ENCODE measurements at regions of chr6 and their contacts with region 1.

Region 1: GRCh38 chr6:104896914-104897313 is 37.2 kb upstream of the HACE1 start:
- DNase-seq: no peak
- H3K4me3 Mint-ChIP-seq: no peak overlapping the region
- H3K27ac Mint-ChIP-seq: no peak overlapping the region
- H3K4me1 Mint-ChIP-seq: no peaks in the 10 kb centered on the region
- H3K27me3 Mint-ChIP-seq: peaks cover 17% of the 10 kb centered on the region
- CTCF ChIP-seq: peak; percentile 31

Region 2: GRCh38 chr6:104908031-104908882 is 11.3 kb after region 1 on chr6:
- CTCF ChIA-PET with region 1: interaction called, 14 read pairs
- POLR2A ChIA-PET with region 1: interaction called, 3 read pairs
- intact Hi-C with region 1: no loop called
- DNase-seq: peak; percentile 24
- H3K4me3 Mint-ChIP-seq: no peak overlapping the region
- H3K27ac Mint-ChIP-seq: no peak overlapping the region
- H3K4me1 Mint-ChIP-seq: peaks cover 6% of the 10 kb centered on the region
- H3K27me3 Mint-ChIP-seq: peaks cover 14% of the 10 kb centered on the region
- CTCF ChIP-seq: no peak

Measured in MCF 10A (cell line).